ENCODE measurements at regions of chr12 and their contacts with region 1.

Region 1: DNA sequence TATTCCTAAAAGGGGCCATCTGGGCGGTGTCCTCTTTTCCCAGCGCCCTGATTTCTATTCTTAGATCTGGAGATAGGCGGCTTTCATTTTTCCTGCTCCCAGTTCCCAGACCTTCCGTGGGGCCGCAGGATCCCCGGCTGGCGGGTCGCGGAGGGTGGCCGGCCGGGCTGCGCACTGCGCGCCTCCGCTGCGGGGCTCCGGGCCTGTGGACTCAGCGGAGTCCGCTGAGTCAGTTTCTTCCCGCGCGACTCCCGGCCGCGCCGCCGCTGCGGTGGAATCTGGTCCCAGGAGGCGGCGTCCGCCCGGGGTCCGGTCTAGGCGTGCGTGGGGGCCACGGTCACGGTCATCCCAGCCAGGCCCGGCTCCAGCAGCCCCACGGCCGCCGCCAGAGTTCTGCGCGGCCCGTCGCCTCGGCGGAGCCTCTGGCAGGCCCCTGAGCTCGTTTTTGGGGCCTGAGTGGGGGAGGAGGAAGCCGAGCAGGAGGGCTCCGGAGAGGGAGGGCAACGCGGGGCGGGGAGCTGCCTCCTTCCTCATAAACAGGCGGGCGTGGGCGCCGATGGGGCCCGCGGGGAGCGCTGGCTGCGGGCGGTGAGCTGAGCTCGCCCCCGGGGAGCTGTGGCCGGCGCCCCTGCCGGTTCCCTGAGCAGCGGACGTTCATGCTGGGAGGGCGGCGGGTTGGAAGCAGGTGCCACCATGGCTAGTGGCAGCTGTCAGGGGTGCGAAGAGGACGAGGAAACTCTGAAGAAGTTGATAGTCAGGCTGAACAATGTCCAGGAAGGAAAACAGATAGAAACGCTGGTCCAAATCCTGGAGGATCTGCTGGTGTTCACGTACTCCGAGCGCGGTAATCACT is at the start of gene LRRK2:
- DNase-seq: peak; percentile 68
- H3K4me3 ChIP-seq: peak within 1 kb of the TSS; percentile 50 to 69
- H3K27ac ChIP-seq: peak within 1 kb of the TSS; percentile 85 to 89
- H3K4me1 ChIP-seq: no peaks in the 10 kb centered on the region
- H3K27me3 ChIP-seq: no peaks in the 10 kb centered on the region
- CTCF ChIP-seq: peak in 1 of 4 experiments; percentile 15
- POLR2A ChIP-seq: no peak
- total RNA-seq, gene LRRK2: 6.2 to 6.8 TPM

Region 2: DNA sequence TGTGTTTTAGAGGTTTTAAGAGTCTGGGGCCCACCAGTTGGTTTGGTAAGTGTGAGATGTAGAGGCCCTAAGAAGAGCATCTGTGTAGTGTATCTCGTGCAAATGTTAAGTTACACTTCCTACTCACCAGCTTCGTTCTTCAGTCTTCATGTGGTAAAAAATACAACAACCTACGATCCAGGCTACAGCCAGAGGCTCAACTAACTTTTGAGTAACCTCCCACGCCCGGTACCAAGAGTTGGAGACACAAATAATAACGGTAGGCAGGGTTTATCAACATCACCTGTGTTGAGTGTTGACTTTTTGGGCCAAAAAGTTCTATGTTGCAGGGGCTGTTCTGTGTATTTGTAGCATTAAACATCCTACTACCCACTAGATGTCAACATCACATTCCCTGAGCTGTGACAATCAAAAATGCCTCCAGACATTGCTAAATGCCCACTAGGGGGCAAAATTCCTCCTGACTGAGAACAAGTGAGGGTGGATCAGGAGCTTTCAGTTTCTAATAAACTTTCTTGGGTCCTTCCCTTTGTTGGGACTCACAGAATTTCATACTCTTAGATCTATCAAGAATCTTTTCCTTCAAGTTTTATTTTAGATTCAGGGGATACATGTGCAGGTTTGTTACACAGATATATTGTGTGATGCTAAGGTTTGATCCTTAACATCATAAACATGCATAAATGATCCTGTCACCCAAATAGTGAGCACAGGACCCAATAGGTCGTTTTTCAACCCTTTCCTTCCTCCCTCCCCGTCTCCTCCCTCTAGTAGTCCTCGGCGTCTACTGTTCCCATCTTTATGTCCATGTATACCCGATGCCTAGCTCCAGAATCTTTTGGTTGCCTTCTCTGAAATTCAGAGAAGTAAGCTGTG is 213.5 kb before region 1 on chr12:
- intact Hi-C with region 1: loop called (anchors 10 kb)
- DNase-seq: peak; percentile 35
- H3K4me3 ChIP-seq: no peak overlapping the region
- H3K27ac ChIP-seq: no peak overlapping the region
- H3K4me1 ChIP-seq: no peaks in the 10 kb centered on the region
- H3K27me3 ChIP-seq: no peaks in the 10 kb centered on the region
- CTCF ChIP-seq: peak; percentile 30 to 66 (median 56)
- POLR2A ChIP-seq: no peak

Measured in prostate gland (tissue), 2 donors.